Activated CD4-positive, alpha-beta T cell treated with anti-CD3 and anti-CD28 coated beads for 36 hours (primary cell): ENCODE measurements at regions of chr6 and their contacts with region 1.

Region 1: GRCh38 chr6:127484212-127484858 is 25.1 kb upstream of the KIAA0408 start:
- DNase-seq: no peak
- ATAC-seq: peak; percentile 93
- H3K4me3 Mint-ChIP-seq: peak overlapping the region; percentile 55
- H3K27ac Mint-ChIP-seq: peak overlapping the region; percentile 5
- H3K4me1 Mint-ChIP-seq: peaks cover 26% of the 10 kb centered on the region
- H3K27me3 Mint-ChIP-seq: peaks cover 20% of the 10 kb centered on the region

Region 2: GRCh38 chr6:127342946-127343808 is 141.2 kb before region 1 on chr6 and contains the start of gene ECHDC1:
- CTCF ChIA-PET with region 1: no interaction called
- POLR2A ChIA-PET with region 1: no interaction called
- intact Hi-C with region 1: loop called in 1 of 2 experiments (anchors 1 kb)
- DNase-seq: peak; percentile 85
- ATAC-seq: peak; percentile 85
- H3K4me3 Mint-ChIP-seq: no peak within 1 kb of the TSS
- H3K27ac Mint-ChIP-seq: no peak within 1 kb of the TSS
- H3K4me1 Mint-ChIP-seq: peaks cover 19% of the 10 kb centered on the region
- H3K27me3 Mint-ChIP-seq: no peaks in the 10 kb centered on the region
- total RNA-seq, gene ECHDC1: 31.1 to 48.2 TPM

Region 3: GRCh38 chr6:129440691-129441090 is 1956.4 kb after region 1 on chr6:
- CTCF ChIA-PET with region 1: no interaction called
- POLR2A ChIA-PET with region 1: no interaction called
- intact Hi-C with region 1: loop called in 1 of 2 experiments (anchors 10 kb)
- DNase-seq: no peak
- ATAC-seq: no peak
- H3K4me3 Mint-ChIP-seq: no peak overlapping the region
- H3K27ac Mint-ChIP-seq: no peak overlapping the region
- H3K4me1 Mint-ChIP-seq: peaks cover 17% of the 10 kb centered on the region
- H3K27me3 Mint-ChIP-seq: no peaks in the 10 kb centered on the region